ENCODE measurements at regions of chr3 and their contacts with region 1.

Region 1: DNA sequence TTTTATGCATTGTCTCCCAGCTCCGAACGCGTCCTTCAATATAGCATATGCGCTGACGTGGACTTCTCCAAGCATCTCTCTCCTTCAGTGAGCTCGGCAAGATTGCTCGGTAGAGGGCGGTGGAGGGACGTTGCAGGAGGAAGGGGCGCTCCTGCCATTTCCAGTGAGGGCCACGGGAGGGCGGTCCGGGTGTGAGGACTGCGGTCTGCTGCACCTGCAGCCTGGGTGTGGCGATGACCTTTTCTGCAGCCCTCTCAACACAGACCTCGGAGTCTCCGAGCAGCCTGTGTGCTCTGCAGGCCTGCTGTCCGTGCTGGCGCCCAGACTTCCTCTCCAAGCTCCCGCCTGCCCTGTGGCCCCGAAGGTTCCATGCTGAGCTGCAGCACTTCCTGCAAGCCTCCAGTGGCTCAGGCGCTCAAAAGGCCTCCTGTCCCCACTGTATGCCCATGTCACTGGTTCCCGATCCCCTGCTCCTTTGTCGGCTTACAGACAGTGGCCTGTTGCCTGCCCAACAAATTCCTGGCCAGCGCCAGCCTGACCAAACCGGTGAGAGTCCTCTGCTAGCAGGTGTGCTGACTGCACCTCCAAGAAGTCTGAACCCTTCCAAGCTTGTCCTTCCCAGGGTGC is 8.9 kb upstream of the RTP3 start:
- DNase-seq: peak; percentile 99
- ATAC-seq: peak; percentile 98
- H3K4me3 Mint-ChIP-seq: no peak overlapping the region
- H3K27ac Mint-ChIP-seq: peak overlapping the region; percentile 55; the same call in 1 of the 2 replicates
- H3K4me1 Mint-ChIP-seq: peaks cover 28% of the 10 kb centered on the region
- H3K27me3 Mint-ChIP-seq: peaks cover 12% of the 10 kb centered on the region
- CTCF ChIP-seq: peak; percentile 92

Region 2: GRCh38 chr3:46006238-46007032 is 482.4 kb before region 1 on chr3:
- CTCF ChIA-PET with region 1: no interaction called
- POLR2A ChIA-PET with region 1: no interaction called
- DNase-seq: no peak
- ATAC-seq: no peak
- H3K4me3 Mint-ChIP-seq: no peak overlapping the region
- H3K27ac Mint-ChIP-seq: no peak overlapping the region
- H3K4me1 Mint-ChIP-seq: peaks cover 28% of the 10 kb centered on the region
- H3K27me3 Mint-ChIP-seq: no peaks in the 10 kb centered on the region; the same call in 1 of the 2 replicates
- CTCF ChIP-seq: no peak

Region 3: DNA sequence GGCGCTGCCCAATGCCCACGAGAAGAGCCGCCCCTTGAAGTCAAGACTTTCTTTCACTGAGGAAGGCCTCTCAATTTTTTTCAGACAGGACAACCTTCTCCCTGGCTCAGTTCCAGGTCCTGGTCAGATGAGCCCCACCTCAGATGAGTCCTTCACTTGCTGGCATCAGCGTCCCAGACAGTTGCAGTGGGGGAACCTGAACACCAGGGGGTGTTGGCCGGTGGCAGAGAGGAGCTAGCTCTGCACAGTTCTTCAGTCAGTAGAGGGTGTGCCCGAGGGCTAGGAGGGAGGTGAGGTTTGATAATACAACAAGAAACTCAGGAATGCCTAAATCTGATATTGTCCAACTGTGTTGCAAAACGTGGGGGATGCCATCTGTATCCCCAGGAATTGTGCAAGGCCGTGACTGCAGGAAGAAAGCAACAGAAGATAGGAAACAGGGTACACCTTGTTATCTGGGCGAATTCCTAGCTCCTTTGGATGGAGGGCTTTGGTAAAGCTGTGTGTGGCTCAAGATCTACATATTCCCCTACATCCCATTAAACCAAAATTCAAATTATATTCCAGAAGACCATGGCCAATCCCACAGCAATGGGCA is 212.2 kb before region 1 on chr3:
- CTCF ChIA-PET with region 1: no interaction called
- POLR2A ChIA-PET with region 1: no interaction called
- DNase-seq: peak; percentile 79
- ATAC-seq: peak; percentile 95
- H3K4me3 Mint-ChIP-seq: no peak overlapping the region
- H3K27ac Mint-ChIP-seq: no peak overlapping the region
- H3K4me1 Mint-ChIP-seq: no peaks in the 10 kb centered on the region
- H3K27me3 Mint-ChIP-seq: peaks cover 9% of the 10 kb centered on the region
- CTCF ChIP-seq: peak; percentile 67

Region 4: DNA sequence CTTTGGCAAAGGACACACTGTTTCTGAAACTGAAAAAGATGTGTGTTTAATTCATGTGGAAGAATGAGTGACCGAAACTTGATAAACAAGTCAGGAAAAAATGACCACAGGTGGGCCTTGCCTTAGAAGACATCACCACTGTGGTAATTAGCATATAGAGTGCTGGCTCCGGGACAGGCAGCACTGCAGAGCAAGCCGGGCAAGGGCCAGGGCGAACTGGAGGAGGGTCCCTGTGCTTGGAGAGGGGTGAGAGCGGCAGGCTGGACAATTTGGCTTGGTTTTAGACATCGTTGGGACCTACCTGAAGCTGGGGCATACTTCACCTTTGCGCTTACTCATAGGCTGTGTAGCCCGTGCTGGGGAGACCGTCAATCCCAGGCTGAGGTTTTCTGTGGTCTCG is 17.1 kb after region 1 on chr3:
- CTCF ChIA-PET with region 1: interaction called, 11 read pairs
- POLR2A ChIA-PET with region 1: no interaction called
- DNase-seq: no peak
- ATAC-seq: peak; percentile 84
- H3K4me3 Mint-ChIP-seq: no peak overlapping the region
- H3K27ac Mint-ChIP-seq: no peak overlapping the region
- H3K4me1 Mint-ChIP-seq: peaks cover 41% of the 10 kb centered on the region
- H3K27me3 Mint-ChIP-seq: peaks cover 8% of the 10 kb centered on the region
- CTCF ChIP-seq: no peak

Region 5: DNA sequence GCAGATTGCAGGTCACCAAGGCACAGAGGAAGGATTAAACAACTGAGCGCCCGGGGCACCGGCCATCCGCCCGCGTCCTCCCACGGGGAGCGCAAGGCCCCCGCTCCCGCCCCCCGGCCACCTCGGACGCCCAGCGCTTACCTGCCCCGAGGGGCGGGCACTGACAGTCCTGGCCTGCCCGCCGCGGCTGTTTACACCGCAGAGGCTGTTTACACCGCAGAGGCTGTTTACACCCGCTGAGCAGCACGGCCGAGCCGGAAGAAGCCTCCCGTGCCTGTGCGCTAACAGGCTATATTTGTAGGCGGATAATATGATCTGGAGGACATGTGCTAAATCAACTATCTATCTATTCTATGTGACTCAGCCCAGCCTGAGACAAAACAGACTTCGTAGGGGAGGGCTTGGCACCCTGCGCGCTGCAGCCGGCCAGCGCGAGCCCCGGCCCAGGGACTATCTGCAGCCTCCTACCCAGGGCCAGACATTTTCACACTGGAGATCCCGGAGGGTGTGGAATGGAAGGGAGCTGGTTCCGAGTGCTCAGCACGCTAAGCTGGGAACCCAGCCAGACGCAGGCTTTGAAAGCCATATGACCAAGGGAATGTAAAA is 77.3 kb after region 1 on chr3 and contains the start of gene LRRC2:
- CTCF ChIA-PET with region 1: interaction called, 99 read pairs
- POLR2A ChIA-PET with region 1: no interaction called
- DNase-seq: peak; percentile 62
- ATAC-seq: peak; percentile 80
- H3K4me3 Mint-ChIP-seq: peak within 1 kb of the TSS; percentile 66
- H3K27ac Mint-ChIP-seq: peak within 1 kb of the TSS; percentile 87
- H3K4me1 Mint-ChIP-seq: peaks cover 55% of the 10 kb centered on the region
- H3K27me3 Mint-ChIP-seq: no peaks in the 10 kb centered on the region; the same call in none of the 2 replicates
- CTCF ChIP-seq: no peak
- total RNA-seq, gene LRRC2: 4.0 to 4.9 TPM (median 4.9 TPM) in 3 replicates

Region 6: GRCh38 chr3:46599590-46599989 is 110.7 kb after region 1 on chr3:
- CTCF ChIA-PET with region 1: interaction called, 21 read pairs
- POLR2A ChIA-PET with region 1: no interaction called
- DNase-seq: no peak
- ATAC-seq: peak; percentile 64
- H3K4me3 Mint-ChIP-seq: no peak overlapping the region; the same call in 1 of the 2 replicates
- H3K27ac Mint-ChIP-seq: peak overlapping the region; percentile 95
- H3K4me1 Mint-ChIP-seq: peaks cover 57% of the 10 kb centered on the region
- H3K27me3 Mint-ChIP-seq: no peaks in the 10 kb centered on the region; the same call in 1 of the 2 replicates
- CTCF ChIP-seq: no peak

Region 7: GRCh38 chr3:46663591-46664135 is 174.8 kb after region 1 on chr3:
- CTCF ChIA-PET with region 1: interaction called, 31 read pairs
- POLR2A ChIA-PET with region 1: no interaction called
- DNase-seq: peak; percentile 58
- ATAC-seq: peak; percentile 37
- H3K4me3 Mint-ChIP-seq: no peak overlapping the region
- H3K27ac Mint-ChIP-seq: no peak overlapping the region; the same call in 1 of the 2 replicates
- H3K4me1 Mint-ChIP-seq: peaks cover 54% of the 10 kb centered on the region
- H3K27me3 Mint-ChIP-seq: no peaks in the 10 kb centered on the region; the same call in 1 of the 2 replicates
- CTCF ChIP-seq: no peak

Measured in WTC11 (cell line).